OCI-LY7 (cell line): ENCODE measurements at regions of chr6 and their contacts with region 1.

Region 1: GRCh38 chr6:155314092-155314772 is at the start of gene TFB1M:
- DNase-seq: peak; percentile 99
- H3K4me3 ChIP-seq: peak within 1 kb of the TSS; percentile 85
- H3K27ac ChIP-seq: peak within 1 kb of the TSS; percentile 89
- H3K4me1 ChIP-seq: peaks cover 28% of the 10 kb centered on the region
- CTCF ChIP-seq: no peak
- total RNA-seq, gene TFB1M: 33.0 and 34.8 TPM in 2 replicates

Region 2: GRCh38 chr6:155181498-155181897 is 132.7 kb before region 1 on chr6:
- CTCF ChIA-PET with region 1: no interaction called
- POLR2A ChIA-PET with region 1: interaction called, 11 read pairs
- intact Hi-C with region 1: loop called (anchors 2 kb)
- DNase-seq: peak; percentile 48
- H3K4me3 ChIP-seq: peak overlapping the region; percentile 65
- H3K27ac ChIP-seq: peak overlapping the region; percentile 81
- H3K4me1 ChIP-seq: peaks cover 69% of the 10 kb centered on the region
- CTCF ChIP-seq: no peak

Region 3: DNA sequence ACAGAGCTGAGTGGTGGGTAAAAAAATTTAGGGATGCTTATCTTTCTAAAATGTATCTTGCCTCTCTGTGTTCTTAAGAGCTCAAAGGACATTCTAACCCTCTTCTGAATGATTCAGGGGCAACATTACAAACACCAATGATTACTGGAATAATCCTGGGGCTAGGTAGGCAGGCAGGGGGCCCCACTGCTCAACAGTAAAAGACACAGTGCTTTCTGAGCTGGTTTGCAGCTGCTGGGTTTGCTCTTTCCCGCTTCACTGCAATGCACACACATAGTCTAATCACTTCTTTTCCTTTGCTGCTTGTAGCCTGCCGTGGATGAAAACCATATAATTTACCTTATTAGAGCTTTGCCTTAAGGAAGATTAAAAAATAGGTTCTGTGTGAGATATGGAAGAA is 26.5 kb before region 1 on chr6:
- CTCF ChIA-PET with region 1: no interaction called
- POLR2A ChIA-PET with region 1: interaction called, 14 read pairs
- intact Hi-C with region 1: no loop called
- DNase-seq: no peak
- H3K4me3 ChIP-seq: no peak overlapping the region
- H3K27ac ChIP-seq: no peak overlapping the region
- H3K4me1 ChIP-seq: no peaks in the 10 kb centered on the region
- CTCF ChIP-seq: no peak

Region 4: GRCh38 chr6:155327326-155328073 is 13.3 kb after region 1 on chr6:
- CTCF ChIA-PET with region 1: interaction called, 4 read pairs
- POLR2A ChIA-PET with region 1: interaction called, 10 read pairs
- intact Hi-C with region 1: no loop called
- DNase-seq: peak; percentile 76
- H3K4me3 ChIP-seq: no peak overlapping the region
- H3K27ac ChIP-seq: no peak overlapping the region
- H3K4me1 ChIP-seq: peaks cover 3% of the 10 kb centered on the region
- CTCF ChIP-seq: peak; percentile 99

Region 5: GRCh38 chr6:155351273-155352129 is 37.3 kb after region 1 on chr6:
- CTCF ChIA-PET with region 1: no interaction called
- POLR2A ChIA-PET with region 1: interaction called, 14 read pairs
- intact Hi-C with region 1: no loop called
- DNase-seq: peak; percentile 79
- H3K4me3 ChIP-seq: peak overlapping the region; percentile 28
- H3K27ac ChIP-seq: peak overlapping the region; percentile 73
- H3K4me1 ChIP-seq: peaks cover 30% of the 10 kb centered on the region
- CTCF ChIP-seq: no peak